ENCODE measurements at regions of chr5 and their contacts with region 1.

Region 1: DNA sequence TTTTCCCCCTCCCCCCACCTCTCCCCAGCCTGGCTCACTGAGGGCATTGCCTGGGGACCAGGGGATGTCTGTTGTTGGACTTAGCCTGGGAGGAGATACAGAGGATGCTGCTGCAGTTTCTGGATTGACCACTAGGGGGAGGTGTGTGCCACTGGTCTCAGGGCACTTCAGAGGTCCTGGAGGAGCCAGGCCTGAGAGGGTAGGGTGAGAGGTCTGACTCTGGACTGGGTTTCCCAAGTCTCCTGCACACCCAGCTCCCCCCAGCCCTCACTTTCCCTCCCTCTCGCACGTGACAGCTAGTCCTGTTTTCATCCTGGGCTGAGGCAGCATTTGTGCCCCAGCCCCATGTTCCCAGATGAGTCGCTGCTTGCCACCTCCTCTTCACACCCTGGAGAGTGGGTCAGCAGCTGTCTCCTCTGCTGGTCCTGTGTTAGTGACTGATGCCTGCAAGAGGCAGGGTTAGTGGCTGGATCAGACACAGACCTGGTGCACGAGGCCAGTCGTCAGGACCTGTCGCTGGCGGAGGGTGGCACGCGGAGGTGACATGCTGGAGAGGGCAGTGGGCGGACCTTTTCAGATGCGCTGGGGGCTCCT is 4.4 kb downstream of the IL3 start:
- DNase-seq: peak in 1 of 2 donors; percentile 85
- H3K4me3 ChIP-seq: no peak overlapping the region
- H3K27ac ChIP-seq: no peak overlapping the region
- H3K4me1 ChIP-seq: no peaks in the 10 kb centered on the region
- H3K27me3 ChIP-seq: no peaks in the 10 kb centered on the region
- CTCF ChIP-seq: peak; percentile 67 to 89 (median 84)

Region 2: GRCh38 chr5:131589510-131590348 is 475.1 kb before region 1 on chr5:
- intact Hi-C with region 1: loop called (anchors 2 kb)
- DNase-seq: no peak
- H3K4me3 ChIP-seq: no peak overlapping the region
- H3K27ac ChIP-seq: no peak overlapping the region
- H3K4me1 ChIP-seq: no peaks in the 10 kb centered on the region
- H3K27me3 ChIP-seq: no peaks in the 10 kb centered on the region
- CTCF ChIP-seq: peak; percentile 72 to 95 (median 82)

Region 3: GRCh38 chr5:131810510-131811249 is 254.2 kb before region 1 on chr5:
- intact Hi-C with region 1: loop called (anchors 5 kb)
- DNase-seq: no peak
- H3K4me3 ChIP-seq: peak overlapping the region; percentile 4 to 15
- H3K27ac ChIP-seq: peak overlapping the region; percentile 50 to 61
- H3K4me1 ChIP-seq: peaks cover 3 to 4% of the 10 kb centered on the region in 2 donors
- H3K27me3 ChIP-seq: no peaks in the 10 kb centered on the region
- CTCF ChIP-seq: peak in 2 of 3 experiments; percentile 15 to 37

Region 4: DNA sequence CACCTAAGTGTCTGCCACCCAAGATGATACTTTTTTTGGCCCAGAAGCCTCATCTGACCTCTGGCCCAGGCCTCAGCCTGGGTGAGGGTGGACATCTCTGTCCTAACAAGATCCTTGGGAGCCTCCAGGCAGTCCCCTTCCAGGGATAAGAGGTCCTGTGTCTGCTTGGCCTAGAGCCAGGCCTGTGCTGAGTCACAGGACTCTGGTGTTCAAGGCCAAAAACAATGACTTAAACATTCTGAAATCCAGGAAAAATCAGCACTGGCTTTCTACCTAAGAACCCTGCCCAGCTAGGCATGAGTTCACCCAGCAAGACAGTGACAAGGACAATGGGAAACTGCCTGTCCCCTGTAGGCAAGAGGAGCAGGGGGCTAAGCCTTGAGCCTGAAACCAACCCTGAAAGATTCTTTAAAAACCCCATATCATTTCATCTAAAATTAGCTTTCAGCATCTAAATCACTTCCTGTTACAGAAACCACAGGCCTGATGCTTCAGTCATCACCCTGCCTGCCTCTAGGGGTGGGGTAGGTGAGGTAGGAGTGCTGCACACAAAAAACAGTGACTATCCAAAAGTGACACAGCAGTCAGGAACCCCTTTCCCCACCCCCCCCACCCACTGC is 38.6 kb after region 1 on chr5:
- intact Hi-C with region 1: loop called (anchors 2 kb)
- DNase-seq: peak; percentile 70 to 96
- H3K4me3 ChIP-seq: no peak overlapping the region
- H3K27ac ChIP-seq: peak overlapping the region; percentile 71 to 72
- H3K4me1 ChIP-seq: peaks cover 9 to 21% of the 10 kb centered on the region in 2 donors
- H3K27me3 ChIP-seq: no peaks in the 10 kb centered on the region
- CTCF ChIP-seq: no peak

Region 5: GRCh38 chr5:132134384-132134783 is 69.5 kb after region 1 on chr5:
- intact Hi-C with region 1: no loop called
- DNase-seq: no peak
- H3K4me3 ChIP-seq: no peak overlapping the region
- H3K27ac ChIP-seq: no peak overlapping the region
- H3K4me1 ChIP-seq: no peaks in the 10 kb centered on the region
- H3K27me3 ChIP-seq: no peaks in the 10 kb centered on the region
- CTCF ChIP-seq: no peak

Region 6: DNA sequence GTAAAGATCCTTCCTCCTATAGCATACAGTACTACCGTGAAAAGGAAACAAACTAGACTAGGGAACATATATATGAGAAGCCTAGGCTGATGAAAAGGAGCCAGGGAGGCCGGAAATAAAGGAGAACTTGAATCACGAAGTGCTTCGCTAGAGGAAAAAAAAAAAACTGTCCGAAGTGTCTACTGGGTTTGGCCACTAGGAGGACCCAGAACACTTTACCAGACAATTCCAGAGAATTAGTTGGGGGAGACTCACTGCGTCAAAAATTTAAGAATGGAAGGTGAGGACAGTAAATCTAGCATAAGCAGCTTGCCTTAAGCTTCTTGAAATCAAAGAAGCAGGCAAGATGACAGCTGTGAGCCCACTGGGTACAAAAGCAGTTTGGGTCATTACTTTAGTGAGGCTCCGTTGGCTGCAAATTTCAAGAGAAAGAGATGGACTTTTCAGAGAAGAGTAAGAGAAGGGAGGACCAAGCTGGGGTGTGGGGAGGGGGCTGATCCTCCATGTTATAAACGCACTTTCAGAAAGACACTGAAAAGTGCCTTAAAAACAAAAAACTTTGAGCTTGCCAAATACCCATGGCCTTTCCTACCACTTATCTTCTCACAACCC is 115.4 kb after region 1 on chr5:
- intact Hi-C with region 1: loop called (anchors 5 kb)
- DNase-seq: no peak
- H3K4me3 ChIP-seq: no peak overlapping the region
- H3K27ac ChIP-seq: no peak overlapping the region
- H3K4me1 ChIP-seq: no peaks in the 10 kb centered on the region
- H3K27me3 ChIP-seq: no peaks in the 10 kb centered on the region
- CTCF ChIP-seq: peak; percentile 42 to 80 (median 73)